Activated CD4-positive, alpha-beta T cell treated with anti-CD3 and anti-CD28 coated beads, Interleukin-2, amount 10 ng/mL, durations not matched to agents 24 days and 14 days (primary cell): ENCODE measurements at regions of chr11 and their contacts with region 1.

Region 1: GRCh38 chr11:31369348-31370329 is at the starts of genes DCDC1 and DNAJC24:
- DNase-seq: peak; percentile 98
- H3K4me3 Mint-ChIP-seq: peak within 1 kb of the TSS; percentile 89
- H3K27ac Mint-ChIP-seq: peak within 1 kb of the TSS; percentile 93
- H3K4me1 Mint-ChIP-seq: peaks cover 15% of the 10 kb centered on the region
- H3K27me3 Mint-ChIP-seq: peaks cover 15% of the 10 kb centered on the region
- total RNA-seq, gene DCDC1: not detected in 2 replicates
- total RNA-seq, gene DNAJC24: 15.8 and 19.0 TPM in 2 replicates

Region 2: GRCh38 chr11:30322826-30323710 is 1046.6 kb before region 1 on chr11 and contains the start of gene ARL14EP:
- intact Hi-C with region 1: loop called (anchors 5 kb)
- DNase-seq: peak; percentile 96
- H3K4me3 Mint-ChIP-seq: peak within 1 kb of the TSS; percentile 100
- H3K27ac Mint-ChIP-seq: peak within 1 kb of the TSS; percentile 100
- H3K4me1 Mint-ChIP-seq: peaks cover 34% of the 10 kb centered on the region
- H3K27me3 Mint-ChIP-seq: peaks cover 16% of the 10 kb centered on the region
- total RNA-seq, gene ARL14EP: 36.5 and 36.8 TPM in 2 replicates

Region 3: DNA sequence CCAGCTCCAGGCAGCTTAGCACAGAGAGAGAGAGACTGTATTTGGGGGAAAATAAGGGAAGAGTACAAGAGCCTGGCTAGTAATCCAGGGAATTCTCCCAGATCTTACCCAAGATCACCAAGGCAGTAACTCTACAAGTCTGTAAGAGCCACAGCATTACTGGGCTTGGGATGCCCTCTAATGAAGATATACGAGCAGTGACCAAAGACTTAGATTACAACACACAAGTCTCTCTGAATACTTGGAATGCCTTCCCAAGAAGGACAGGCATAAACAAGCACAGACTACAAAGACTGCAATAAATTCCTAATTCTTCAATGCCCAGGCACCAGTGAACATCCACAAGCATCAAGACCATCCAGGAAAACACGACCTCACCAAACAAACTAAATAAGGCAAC is 17.7 kb after region 1 on chr11:
- intact Hi-C with region 1: no loop called
- DNase-seq: no peak
- H3K4me3 Mint-ChIP-seq: no peak overlapping the region
- H3K27ac Mint-ChIP-seq: no peak overlapping the region
- H3K4me1 Mint-ChIP-seq: no peaks in the 10 kb centered on the region
- H3K27me3 Mint-ChIP-seq: no peaks in the 10 kb centered on the region

Region 4: DNA sequence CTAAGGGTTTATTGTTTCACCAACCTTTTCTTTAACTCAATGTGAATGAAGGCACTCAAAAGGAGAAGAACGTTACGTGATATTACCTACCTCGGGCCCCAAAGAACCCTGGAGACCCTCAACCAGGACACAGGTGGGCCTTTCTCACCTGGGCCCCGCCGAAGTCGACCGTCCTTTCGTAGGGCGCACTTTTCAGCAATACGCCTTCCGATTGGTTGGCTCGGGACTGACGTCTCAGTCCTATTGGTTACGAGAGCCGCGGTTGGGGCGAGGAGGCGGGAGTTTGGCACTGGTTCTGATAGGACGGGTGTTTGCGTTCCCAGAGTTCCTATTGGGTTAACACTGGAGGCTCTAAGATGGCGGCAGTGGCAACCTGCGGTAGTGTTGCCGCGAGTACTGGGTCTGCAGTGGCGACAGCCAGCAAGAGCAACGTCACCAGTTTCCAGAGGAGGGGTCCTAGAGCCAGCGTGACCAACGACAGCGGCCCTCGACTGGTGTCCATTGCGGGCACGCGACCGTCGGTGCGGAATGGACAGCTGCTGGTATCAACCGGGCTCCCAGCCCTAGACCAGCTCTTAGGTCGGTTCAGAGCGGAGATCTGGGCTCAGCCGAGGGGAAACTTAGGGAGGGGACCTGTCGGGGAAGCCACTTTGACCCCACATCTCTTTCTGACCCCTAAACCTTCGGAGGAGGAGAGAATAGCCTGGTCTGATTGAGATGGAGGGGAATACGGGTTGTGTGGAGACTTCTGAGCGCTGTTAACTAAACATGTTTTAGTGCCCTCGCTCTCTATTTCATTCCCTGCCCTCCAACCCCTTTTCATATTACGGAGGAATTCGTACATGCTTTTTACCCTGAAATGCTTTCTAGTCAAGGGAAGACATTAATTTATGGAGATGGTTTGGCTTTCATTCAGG is 140.0 kb after region 1 on chr11 and contains the starts of genes ELP4 and IMMP1L:
- intact Hi-C with region 1: loop called (anchors 1 kb)
- DNase-seq: peak; percentile 99
- H3K4me3 Mint-ChIP-seq: peak within 1 kb of the TSS; percentile 96
- H3K27ac Mint-ChIP-seq: peak within 1 kb of the TSS; percentile 91
- H3K4me1 Mint-ChIP-seq: peaks cover 25% of the 10 kb centered on the region
- H3K27me3 Mint-ChIP-seq: no peaks in the 10 kb centered on the region
- total RNA-seq, gene ELP4: 17.4 and 20.6 TPM in 2 replicates
- total RNA-seq, gene IMMP1L: 24.0 and 27.2 TPM in 2 replicates

Region 5: GRCh38 chr11:31958076-31958735 is 588.6 kb after region 1 on chr11:
- intact Hi-C with region 1: loop called (anchors 10 kb)
- DNase-seq: peak; percentile 92
- H3K4me3 Mint-ChIP-seq: no peak overlapping the region
- H3K27ac Mint-ChIP-seq: no peak overlapping the region
- H3K4me1 Mint-ChIP-seq: peaks cover 5% of the 10 kb centered on the region
- H3K27me3 Mint-ChIP-seq: peaks cover 13% of the 10 kb centered on the region

Region 6: DNA sequence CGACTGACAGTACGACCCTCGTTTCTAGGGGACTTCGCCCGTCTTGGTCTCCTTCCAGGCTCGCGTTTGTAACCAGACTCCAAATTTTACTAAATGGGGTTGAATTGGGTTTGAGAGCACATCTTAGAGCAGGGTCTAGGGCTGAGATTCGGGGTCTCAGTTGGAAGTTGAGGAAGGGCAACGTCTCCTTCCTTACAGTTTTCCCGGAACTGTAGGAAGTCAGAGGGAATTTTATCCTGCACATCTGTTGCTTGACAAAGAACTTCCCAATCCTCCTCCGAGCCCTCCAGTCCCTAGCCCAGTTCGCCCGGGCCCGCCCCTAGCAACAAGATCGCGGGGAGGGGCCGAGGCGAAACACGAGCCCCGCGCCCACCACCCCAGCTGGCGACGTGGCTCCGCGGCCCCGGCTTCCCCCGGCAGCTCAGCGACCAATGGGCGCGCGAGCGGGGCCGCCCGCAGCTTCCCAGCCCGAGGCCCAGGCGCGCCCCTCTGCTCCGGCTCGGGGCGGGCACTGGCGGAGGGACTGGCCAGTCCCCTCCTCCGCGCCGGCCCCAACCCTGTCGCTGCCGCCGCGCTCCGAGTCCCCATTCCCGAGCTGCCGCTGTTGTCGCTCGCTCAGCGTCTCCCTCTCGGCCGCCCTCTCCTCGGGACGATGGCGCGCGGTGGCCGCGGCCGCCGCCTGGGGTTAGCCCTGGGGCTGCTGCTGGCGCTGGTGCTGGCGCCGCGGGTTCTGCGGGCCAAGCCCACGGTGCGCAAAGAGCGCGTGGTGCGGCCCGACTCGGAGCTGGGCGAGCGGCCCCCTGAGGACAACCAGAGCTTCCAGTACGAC is 721.1 kb after region 1 on chr11 and contains the start of gene RCN1:
- intact Hi-C with region 1: loop called (anchors 1 kb)
- DNase-seq: peak; percentile 84
- H3K4me3 Mint-ChIP-seq: peak within 1 kb of the TSS; percentile 85
- H3K27ac Mint-ChIP-seq: peak within 1 kb of the TSS; percentile 92
- H3K4me1 Mint-ChIP-seq: peaks cover 35% of the 10 kb centered on the region
- H3K27me3 Mint-ChIP-seq: peaks cover 13% of the 10 kb centered on the region
- total RNA-seq, gene RCN1: 30.5 and 30.6 TPM in 2 replicates